ENCODE measurements at regions of chr6 and their contacts with region 1.

Region 1: DNA sequence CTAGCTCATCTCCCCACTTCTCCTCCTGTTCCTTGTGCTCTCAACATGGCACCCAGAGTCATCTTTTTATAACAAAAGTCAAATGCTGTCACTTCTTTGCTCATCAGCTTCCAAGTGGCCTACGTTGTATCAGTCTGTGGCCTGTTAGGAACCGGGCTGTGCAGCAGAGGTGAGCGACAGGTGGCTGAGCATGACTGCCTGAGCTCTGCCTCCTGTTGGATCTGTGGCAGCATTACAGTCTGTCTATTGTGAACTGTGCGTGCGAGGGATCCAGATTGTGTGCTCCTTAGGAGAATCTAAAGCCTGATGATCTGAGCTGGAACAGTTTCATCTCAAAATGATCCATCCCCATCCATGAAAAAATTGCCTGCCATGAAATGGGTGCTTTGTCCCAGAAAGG is 129.6 kb downstream of the FNDC1 start:
- DNase-seq: no peak
- H3K4me3 Mint-ChIP-seq: no peak overlapping the region
- H3K27ac Mint-ChIP-seq: no peak overlapping the region
- H3K4me1 Mint-ChIP-seq: no peaks in the 10 kb centered on the region
- H3K27me3 Mint-ChIP-seq: peaks cover 63% of the 10 kb centered on the region
- CTCF ChIP-seq: no peak

Region 2: GRCh38 chr6:159149641-159150040 is 149.2 kb before region 1 on chr6:
- CTCF ChIA-PET with region 1: no interaction called
- intact Hi-C with region 1: no loop called
- DNase-seq: no peak
- H3K4me3 Mint-ChIP-seq: no peak overlapping the region
- H3K27ac Mint-ChIP-seq: no peak overlapping the region
- H3K4me1 Mint-ChIP-seq: no peaks in the 10 kb centered on the region
- H3K27me3 Mint-ChIP-seq: peaks cover 54% of the 10 kb centered on the region
- CTCF ChIP-seq: no peak

Region 3: DNA sequence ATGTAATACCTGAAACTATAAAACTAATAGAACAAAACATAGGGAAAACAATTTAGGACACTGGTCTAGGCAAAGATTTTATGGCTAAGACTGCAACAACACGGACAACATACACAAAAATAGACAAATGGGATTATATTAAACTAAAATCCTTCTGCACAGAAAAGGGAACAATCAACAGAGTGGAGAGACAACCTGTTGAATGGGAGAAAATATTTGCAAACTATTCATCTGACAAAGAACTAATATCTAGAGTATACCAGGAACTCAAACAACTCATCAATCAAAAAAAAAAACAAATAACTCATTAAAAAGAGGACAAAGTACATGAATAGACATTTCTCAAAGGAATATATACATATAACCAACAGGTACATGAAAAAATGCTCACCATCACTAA is 44.9 kb after region 1 on chr6:
- CTCF ChIA-PET with region 1: no interaction called
- intact Hi-C with region 1: loop called (anchors 1 kb)
- DNase-seq: no peak
- H3K4me3 Mint-ChIP-seq: no peak overlapping the region
- H3K27ac Mint-ChIP-seq: no peak overlapping the region
- H3K4me1 Mint-ChIP-seq: no peaks in the 10 kb centered on the region
- H3K27me3 Mint-ChIP-seq: peaks cover 33% of the 10 kb centered on the region
- CTCF ChIP-seq: no peak

Region 4: DNA sequence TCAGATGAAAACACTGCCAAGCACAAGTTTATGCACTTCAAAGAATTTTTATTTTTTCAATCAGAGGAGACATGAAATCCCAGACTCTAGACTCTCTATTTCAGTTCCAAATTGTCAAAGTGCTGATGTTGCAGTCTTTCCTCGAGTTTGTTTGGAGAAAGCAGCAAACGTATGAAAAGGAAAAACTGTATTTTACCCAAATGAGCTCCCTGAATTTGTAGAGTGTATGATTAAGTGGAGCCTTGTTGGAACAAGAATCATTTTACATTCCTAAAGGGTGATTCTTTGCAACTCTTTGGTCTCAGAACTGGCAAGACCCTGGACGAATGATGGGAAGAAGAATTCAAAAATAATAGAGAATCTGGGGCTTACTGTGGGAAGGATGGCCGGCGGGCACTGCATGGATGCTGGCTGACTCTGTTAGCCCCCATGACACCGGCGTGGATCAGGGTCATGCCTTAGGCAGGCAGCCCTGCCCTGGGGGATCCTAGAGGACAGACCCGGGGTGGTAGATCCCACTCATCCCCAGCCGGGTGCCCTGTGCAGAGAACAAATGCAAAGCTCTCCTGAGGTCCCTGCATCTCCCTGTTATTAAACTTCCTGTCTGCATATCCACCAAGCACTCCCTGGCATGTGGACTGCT is 77.8 kb after region 1 on chr6:
- CTCF ChIA-PET with region 1: no interaction called
- intact Hi-C with region 1: no loop called
- DNase-seq: no peak
- H3K4me3 Mint-ChIP-seq: no peak overlapping the region
- H3K27ac Mint-ChIP-seq: no peak overlapping the region
- H3K4me1 Mint-ChIP-seq: no peaks in the 10 kb centered on the region
- H3K27me3 Mint-ChIP-seq: peaks cover 99% of the 10 kb centered on the region
- CTCF ChIP-seq: no peak